ENCODE measurements at regions of chr12 and their contacts with region 1.

Region 1: DNA sequence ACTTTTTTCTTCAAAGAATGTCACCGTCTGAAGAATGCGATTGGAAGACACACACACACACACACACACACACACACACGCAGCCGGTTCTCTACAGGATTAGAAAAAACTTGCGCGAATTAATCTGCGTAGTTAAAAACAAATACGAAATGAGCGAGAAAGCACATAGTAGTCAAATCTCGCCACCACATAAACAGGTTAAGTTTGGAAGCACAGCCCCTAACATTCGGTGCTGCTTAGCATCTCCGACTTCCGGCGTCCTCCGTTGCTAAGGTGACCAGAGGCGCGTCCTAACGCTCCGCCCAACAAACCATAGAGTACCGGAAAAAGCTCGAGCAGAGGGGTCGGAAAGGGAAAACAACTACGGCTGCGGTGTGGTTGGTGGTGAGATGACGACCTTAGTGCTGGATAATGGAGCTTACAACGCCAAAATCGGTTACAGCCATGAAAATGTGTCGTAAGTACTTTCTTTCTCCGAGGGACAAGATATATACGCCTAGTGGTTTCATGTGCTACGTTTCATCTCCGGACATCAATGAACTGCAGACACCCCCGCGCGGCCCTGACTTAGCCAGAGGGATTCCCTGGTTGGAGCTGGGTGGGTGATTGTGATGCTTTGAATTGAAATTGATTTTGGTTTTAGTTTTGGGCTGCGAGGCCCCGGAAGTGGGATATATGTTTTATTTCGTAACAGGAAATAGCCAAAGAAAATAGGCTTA is at the start of gene ACTR6:
- DNase-seq: peak; percentile 98
- H3K4me3 ChIP-seq: peak within 1 kb of the TSS; percentile 86
- H3K27ac ChIP-seq: peak within 1 kb of the TSS; percentile 71
- H3K4me1 ChIP-seq: peaks cover 3% of the 10 kb centered on the region
- H3K27me3 ChIP-seq: no peaks in the 10 kb centered on the region
- CTCF ChIP-seq: 0 out of 2 replicates have a peak, but pooled peaks have one; percentile 22
- total RNA-seq, gene ACTR6: 36.0 and 39.7 TPM in 2 replicates

Region 2: DNA sequence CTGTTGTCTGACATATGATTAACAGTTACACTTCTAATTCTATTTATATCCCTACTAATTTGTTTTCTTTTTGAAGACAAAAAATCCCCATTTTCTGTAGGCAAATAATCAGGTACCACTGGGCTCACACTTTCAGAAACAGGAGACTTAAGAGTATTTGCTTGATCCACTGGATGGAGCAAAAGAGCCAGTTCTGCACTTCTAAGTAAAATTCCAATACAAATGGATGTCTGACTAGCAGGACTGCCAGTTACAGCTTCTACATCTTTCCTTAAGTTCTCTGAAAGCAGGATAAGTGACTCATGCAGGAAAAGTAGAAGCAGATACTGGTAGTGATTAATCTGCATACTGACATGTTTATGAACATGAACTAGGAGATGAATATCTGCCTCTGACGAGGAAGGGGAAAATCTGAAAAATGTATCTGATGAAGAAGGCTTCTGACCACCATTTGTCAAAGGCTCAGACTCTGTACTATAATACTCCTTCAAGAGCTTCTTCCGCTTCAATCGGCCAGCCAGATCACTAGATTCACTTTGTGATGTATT is 142.1 kb before region 1 on chr12:
- CTCF ChIA-PET with region 1: no interaction called
- POLR2A ChIA-PET with region 1: no interaction called
- intact Hi-C with region 1: loop called (anchors 10 kb)
- DNase-seq: peak; percentile 38
- H3K4me3 ChIP-seq: no peak overlapping the region
- H3K27ac ChIP-seq: no peak overlapping the region
- H3K4me1 ChIP-seq: no peaks in the 10 kb centered on the region
- H3K27me3 ChIP-seq: no peaks in the 10 kb centered on the region
- CTCF ChIP-seq: peak; percentile 36; the same call in 1 of the 2 replicates

Region 3: GRCh38 chr12:101501410-101501995 is 1300.9 kb after region 1 on chr12:
- CTCF ChIA-PET with region 1: no interaction called
- POLR2A ChIA-PET with region 1: no interaction called
- intact Hi-C with region 1: no loop called
- DNase-seq: no peak
- H3K4me3 ChIP-seq: no peak overlapping the region
- H3K27ac ChIP-seq: no peak overlapping the region
- H3K4me1 ChIP-seq: no peaks in the 10 kb centered on the region
- H3K27me3 ChIP-seq: peaks cover 28% of the 10 kb centered on the region
- CTCF ChIP-seq: no peak